Adrenal gland (tissue), 19 donors: ENCODE measurements at regions of chr17 and their contacts with region 1.

Region 1: GRCh38 chr17:32253117-32253611 is 12.5 kb upstream of the RHBDL3 start:
- DNase-seq: peak; percentile 78 to 96 (median 87)
- H3K4me3 ChIP-seq: no peak overlapping the region
- H3K27ac ChIP-seq: no peak overlapping the region
- H3K4me1 ChIP-seq: peaks cover 0 to 9% of the 10 kb centered on the region in 2 donors
- H3K27me3 ChIP-seq: no peaks in the 10 kb centered on the region
- CTCF ChIP-seq: peak; percentile 94 to 99 (median 98)
- POLR2A ChIP-seq: no peak

Region 2: GRCh38 chr17:32141258-32141657 is 111.9 kb before region 1 on chr17:
- intact Hi-C with region 1: no loop called
- DNase-seq: peak in 6 of 7 donors; percentile 46 to 74 (median 68)
- H3K4me3 ChIP-seq: peak overlapping the region in 2 of 4 donors; percentile 61 to 71
- H3K27ac ChIP-seq: peak overlapping the region; percentile 90 to 98 (median 91)
- H3K4me1 ChIP-seq: peaks cover 27 to 38% of the 10 kb centered on the region in 2 donors
- H3K27me3 ChIP-seq: no peaks in the 10 kb centered on the region
- CTCF ChIP-seq: no peak
- POLR2A ChIP-seq: peak in 1 of 2 donors; percentile 16

Region 3: DNA sequence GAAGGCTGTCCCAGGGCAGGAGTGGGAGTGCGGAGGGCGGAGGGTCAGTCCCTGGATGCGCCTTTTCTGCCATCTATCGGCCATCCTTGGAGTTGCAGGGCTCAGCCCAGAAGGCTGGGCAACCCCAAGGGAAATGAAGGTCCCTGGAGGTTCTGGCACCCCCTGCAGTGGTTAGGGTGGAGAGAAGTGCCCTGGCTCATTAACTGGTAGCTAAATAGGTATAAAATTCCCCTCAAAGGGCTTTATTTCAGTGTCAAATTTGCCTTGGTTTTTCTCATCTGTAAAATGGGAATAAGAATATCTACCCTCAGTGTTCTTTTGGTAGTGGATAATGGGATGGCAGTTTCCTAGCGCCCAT is 66.4 kb after region 1 on chr17:
- intact Hi-C with region 1: loop called (anchors 2 kb)
- DNase-seq: peak; percentile 72 to 90 (median 81)
- H3K4me3 ChIP-seq: no peak overlapping the region
- H3K27ac ChIP-seq: no peak overlapping the region
- H3K4me1 ChIP-seq: peaks cover 0 to 8% of the 10 kb centered on the region in 2 donors
- H3K27me3 ChIP-seq: no peaks in the 10 kb centered on the region
- CTCF ChIP-seq: peak; percentile 87 to 98 (median 95)
- POLR2A ChIP-seq: no peak

Region 4: GRCh38 chr17:32482568-32483320 is 229.6 kb after region 1 on chr17:
- intact Hi-C with region 1: no loop called
- DNase-seq: peak in 2 of 7 donors; percentile 8 to 53
- H3K4me3 ChIP-seq: no peak overlapping the region
- H3K27ac ChIP-seq: peak overlapping the region in 3 of 5 donors; percentile 69 to 87 (median 79)
- H3K4me1 ChIP-seq: peaks cover 24 to 26% of the 10 kb centered on the region in 2 donors
- H3K27me3 ChIP-seq: no peaks in the 10 kb centered on the region
- CTCF ChIP-seq: no peak
- POLR2A ChIP-seq: no peak